ENCODE measurements at regions of chr5 and their contacts with region 1.

Region 1: DNA sequence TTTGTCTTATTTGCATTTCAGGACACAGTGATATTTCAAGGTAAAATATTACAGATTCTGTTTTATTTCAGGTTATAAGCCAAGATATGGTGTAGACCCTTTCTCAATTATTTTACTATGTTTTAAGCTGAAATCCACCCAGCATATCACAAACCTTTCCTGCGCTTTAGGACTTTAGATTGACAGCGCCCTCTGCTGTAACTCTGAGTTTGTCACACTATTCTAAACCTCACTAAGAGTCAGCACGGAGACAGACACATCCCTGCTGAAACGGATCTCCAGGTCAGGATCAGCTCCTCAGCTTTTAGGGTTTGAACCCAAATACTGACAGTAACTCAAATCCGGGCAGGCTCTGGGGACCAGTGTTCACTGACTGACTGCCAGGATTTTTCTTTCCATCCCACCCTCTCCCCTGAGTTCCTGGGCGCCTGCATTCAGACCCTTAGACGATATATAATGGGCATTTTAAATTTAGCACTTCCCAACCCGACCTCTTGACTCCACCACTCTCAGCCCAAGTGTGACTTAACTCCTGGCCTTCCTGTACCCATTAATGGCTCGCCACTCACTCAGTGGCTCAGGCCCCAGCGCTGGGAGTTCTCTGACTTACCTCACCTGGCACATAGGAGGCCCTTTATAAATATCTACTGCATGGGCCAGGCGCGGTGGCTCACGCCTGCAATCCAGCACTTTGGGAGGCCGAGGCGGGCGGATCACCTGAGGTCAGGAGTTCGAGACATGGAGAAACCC is 33.5 kb downstream of the TLX3 start:
- DNase-seq: peak; percentile 82
- H3K4me3 Mint-ChIP-seq: no peak overlapping the region
- H3K27ac Mint-ChIP-seq: no peak overlapping the region
- H3K4me1 Mint-ChIP-seq: no peaks in the 10 kb centered on the region
- H3K27me3 Mint-ChIP-seq: no peaks in the 10 kb centered on the region
- CTCF ChIP-seq: peak; percentile 94

Region 2: DNA sequence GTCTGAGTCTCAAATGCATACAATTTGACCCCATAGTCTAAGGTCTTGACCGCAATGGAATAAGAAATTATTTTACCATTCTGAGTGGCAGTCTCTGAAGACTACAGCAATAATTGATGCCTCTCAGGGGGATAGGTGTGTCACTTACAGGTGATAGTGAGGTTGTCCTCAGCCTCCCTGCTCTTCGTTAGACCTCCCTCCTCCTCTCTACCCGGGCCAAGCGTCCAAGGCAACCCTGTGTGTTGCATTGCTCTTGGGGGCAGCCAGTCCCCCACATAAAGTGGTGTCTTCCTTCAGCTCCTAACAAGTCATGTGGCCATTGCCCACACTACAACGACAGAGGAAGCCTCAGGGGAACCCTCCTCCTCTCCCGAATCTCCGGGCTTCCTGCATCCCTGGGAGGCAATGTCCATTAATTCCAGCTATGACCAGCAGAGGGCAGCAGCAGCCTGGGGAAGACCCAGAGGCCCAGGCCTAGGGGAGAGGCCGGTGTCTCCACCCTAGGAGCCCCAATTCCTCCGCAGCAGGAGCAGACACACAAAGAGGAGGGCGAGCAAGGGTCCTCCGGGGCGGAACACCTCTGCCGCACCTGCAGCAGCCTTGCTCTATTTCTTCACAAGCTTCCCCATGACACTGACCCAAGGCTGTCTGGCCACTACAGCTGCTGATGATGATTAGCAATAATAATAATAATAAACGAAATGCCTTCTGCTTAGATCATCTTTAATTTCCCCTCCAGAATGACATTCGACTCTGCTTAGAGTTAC is 703.9 kb before region 1 on chr5:
- CTCF ChIA-PET with region 1: interaction called, 4 read pairs
- POLR2A ChIA-PET with region 1: no interaction called
- intact Hi-C with region 1: loop called (anchors 1 kb)
- DNase-seq: peak; percentile 84
- H3K4me3 Mint-ChIP-seq: no peak overlapping the region
- H3K27ac Mint-ChIP-seq: no peak overlapping the region
- H3K4me1 Mint-ChIP-seq: peaks cover 19% of the 10 kb centered on the region
- H3K27me3 Mint-ChIP-seq: no peaks in the 10 kb centered on the region
- CTCF ChIP-seq: peak; percentile 98

Region 3: GRCh38 chr5:171207256-171207847 is 135.2 kb before region 1 on chr5:
- CTCF ChIA-PET with region 1: interaction called, 299 read pairs
- POLR2A ChIA-PET with region 1: no interaction called
- intact Hi-C with region 1: loop called (anchors 1 kb)
- DNase-seq: peak; percentile 69
- H3K4me3 Mint-ChIP-seq: no peak overlapping the region
- H3K27ac Mint-ChIP-seq: no peak overlapping the region
- H3K4me1 Mint-ChIP-seq: peaks cover 4% of the 10 kb centered on the region
- H3K27me3 Mint-ChIP-seq: no peaks in the 10 kb centered on the region
- CTCF ChIP-seq: peak; percentile 74

Region 4: DNA sequence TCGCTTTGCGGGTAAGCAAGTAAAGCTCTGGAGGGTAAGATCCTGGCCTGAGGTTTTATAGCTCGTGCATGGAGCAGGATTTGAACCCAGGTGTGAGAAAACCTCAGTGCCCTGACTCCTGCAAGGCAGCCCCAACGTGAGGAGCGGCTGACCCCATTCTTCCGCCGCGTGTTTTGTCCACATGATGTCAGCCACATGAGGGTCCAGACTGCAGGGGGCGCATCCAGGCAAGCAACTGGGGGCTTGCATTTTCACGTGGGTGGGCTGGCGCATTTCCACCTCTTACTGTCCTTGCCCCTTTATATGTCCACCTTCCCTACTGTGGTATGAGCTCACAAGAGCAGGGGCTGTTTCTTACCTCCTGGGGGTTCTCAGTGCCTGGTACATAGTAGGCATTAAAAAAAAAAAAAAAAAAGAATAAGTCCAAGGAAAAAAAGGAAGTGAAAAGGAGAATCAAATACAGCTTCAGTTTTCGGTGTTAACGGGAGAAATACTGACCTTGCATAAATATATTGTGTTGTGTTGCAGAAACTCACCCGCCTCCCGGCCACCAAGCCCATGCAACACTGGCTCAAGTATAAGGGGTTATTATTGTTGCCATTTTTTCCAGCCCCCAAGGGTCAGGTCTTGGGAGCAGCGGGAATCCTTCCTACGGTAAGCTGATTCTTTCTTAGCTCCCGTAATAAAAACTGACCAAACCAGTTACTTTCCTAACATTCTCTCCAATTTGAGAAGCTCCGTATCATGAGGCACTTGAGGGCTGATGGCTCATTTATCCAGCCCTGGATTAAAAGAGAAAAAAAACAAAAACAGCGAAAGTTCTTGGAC is 18.5 kb before region 1 on chr5:
- CTCF ChIA-PET with region 1: interaction called, 11 read pairs
- POLR2A ChIA-PET with region 1: no interaction called
- intact Hi-C with region 1: no loop called
- DNase-seq: no peak
- H3K4me3 Mint-ChIP-seq: no peak overlapping the region
- H3K27ac Mint-ChIP-seq: no peak overlapping the region
- H3K4me1 Mint-ChIP-seq: no peaks in the 10 kb centered on the region
- H3K27me3 Mint-ChIP-seq: peaks cover 41% of the 10 kb centered on the region
- CTCF ChIP-seq: no peak

Region 5: DNA sequence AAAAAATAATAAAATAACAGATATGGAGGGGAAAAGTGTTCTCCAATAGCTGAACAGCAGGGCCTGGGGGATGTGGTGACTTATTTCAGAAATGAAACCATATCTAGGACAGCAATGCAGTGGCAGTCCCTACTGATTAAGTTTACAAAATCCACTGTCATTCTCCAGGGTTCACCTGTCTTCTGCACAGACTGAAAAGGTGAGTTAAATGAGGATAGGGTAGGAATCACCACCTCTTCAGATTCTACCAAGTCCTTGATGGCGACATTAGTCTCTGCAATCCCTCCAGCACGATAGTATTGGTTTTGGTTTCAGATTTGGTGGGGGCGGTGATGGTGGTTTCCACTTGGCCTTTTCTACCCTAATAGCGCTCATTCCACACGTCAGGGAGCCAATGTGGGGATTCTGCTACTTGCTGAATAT is 12.8 kb after region 1 on chr5:
- CTCF ChIA-PET with region 1: interaction called, 25 read pairs
- POLR2A ChIA-PET with region 1: no interaction called
- intact Hi-C with region 1: no loop called
- DNase-seq: no peak
- H3K4me3 Mint-ChIP-seq: no peak overlapping the region
- H3K27ac Mint-ChIP-seq: no peak overlapping the region
- H3K4me1 Mint-ChIP-seq: no peaks in the 10 kb centered on the region
- H3K27me3 Mint-ChIP-seq: no peaks in the 10 kb centered on the region
- CTCF ChIP-seq: no peak